ENCODE measurements at regions of chr7 and their contacts with region 1.

Region 1: GRCh38 chr7:92833024-92833765 is 3.2 kb downstream of the CDK6 start:
- DNase-seq: peak; percentile 83 to 89 (median 86)
- H3K4me3 ChIP-seq: peak overlapping the region; percentile 73 to 89
- H3K4me3 Mint-ChIP-seq: peak overlapping the region; percentile 87 to 98 (median 94)
- H3K27ac ChIP-seq: peak overlapping the region; percentile 68
- H3K27ac Mint-ChIP-seq: peak overlapping the region; percentile 93 to 96 (median 94)
- H3K4me1 ChIP-seq: peaks cover 36% of the 10 kb centered on the region
- H3K4me1 Mint-ChIP-seq: peaks cover 30 to 66% (median 43%) of the 10 kb centered on the region in 4 donors
- H3K27me3 ChIP-seq: no peaks in the 10 kb centered on the region
- H3K27me3 Mint-ChIP-seq: no peaks in the 10 kb centered on the region

Region 2: GRCh38 chr7:92134271-92135051 is 698.7 kb before region 1 on chr7 and contains the start of gene CYP51A1:
- CTCF ChIA-PET with region 1: no interaction called
- POLR2A ChIA-PET with region 1: no interaction called
- intact Hi-C with region 1: loop called (anchors 10 kb)
- DNase-seq: peak; percentile 94 to 97 (median 95)
- H3K4me3 ChIP-seq: peak within 1 kb of the TSS; percentile 45 to 92
- H3K4me3 Mint-ChIP-seq: peak within 1 kb of the TSS; percentile 96 to 100 (median 99)
- H3K27ac ChIP-seq: peak within 1 kb of the TSS; percentile 77
- H3K27ac Mint-ChIP-seq: peak within 1 kb of the TSS; percentile 97 to 100 (median 100)
- H3K4me1 ChIP-seq: peaks cover 19% of the 10 kb centered on the region
- H3K4me1 Mint-ChIP-seq: peaks cover 18 to 36% (median 26%) of the 10 kb centered on the region in 4 donors
- H3K27me3 ChIP-seq: no peaks in the 10 kb centered on the region
- H3K27me3 Mint-ChIP-seq: no peaks in the 10 kb centered on the region
- total RNA-seq, gene CYP51A1: 14.3 to 15.2 TPM

Region 3: GRCh38 chr7:92528188-92528957 is 304.8 kb before region 1 on chr7 and contains the starts of genes PEX1 and RBM48:
- CTCF ChIA-PET with region 1: interaction called, 4 read pairs
- POLR2A ChIA-PET with region 1: interaction called, 11 read pairs
- intact Hi-C with region 1: loop called (anchors 1 kb)
- DNase-seq: peak; percentile 93 to 98 (median 98)
- H3K4me3 ChIP-seq: peak within 1 kb of the TSS; percentile 92 to 97
- H3K4me3 Mint-ChIP-seq: peak within 1 kb of the TSS; percentile 93 to 99 (median 96)
- H3K27ac ChIP-seq: peak within 1 kb of the TSS; percentile 91
- H3K27ac Mint-ChIP-seq: peak within 1 kb of the TSS; percentile 87 to 100 (median 98)
- H3K4me1 ChIP-seq: peaks cover 33% of the 10 kb centered on the region
- H3K4me1 Mint-ChIP-seq: peaks cover 31 to 52% (median 38%) of the 10 kb centered on the region in 4 donors
- H3K27me3 ChIP-seq: no peaks in the 10 kb centered on the region
- H3K27me3 Mint-ChIP-seq: no peaks in the 10 kb centered on the region
- total RNA-seq, gene PEX1: 35.4 to 38.0 TPM
- total RNA-seq, gene RBM48: 37.5 to 37.9 TPM

Region 4: DNA sequence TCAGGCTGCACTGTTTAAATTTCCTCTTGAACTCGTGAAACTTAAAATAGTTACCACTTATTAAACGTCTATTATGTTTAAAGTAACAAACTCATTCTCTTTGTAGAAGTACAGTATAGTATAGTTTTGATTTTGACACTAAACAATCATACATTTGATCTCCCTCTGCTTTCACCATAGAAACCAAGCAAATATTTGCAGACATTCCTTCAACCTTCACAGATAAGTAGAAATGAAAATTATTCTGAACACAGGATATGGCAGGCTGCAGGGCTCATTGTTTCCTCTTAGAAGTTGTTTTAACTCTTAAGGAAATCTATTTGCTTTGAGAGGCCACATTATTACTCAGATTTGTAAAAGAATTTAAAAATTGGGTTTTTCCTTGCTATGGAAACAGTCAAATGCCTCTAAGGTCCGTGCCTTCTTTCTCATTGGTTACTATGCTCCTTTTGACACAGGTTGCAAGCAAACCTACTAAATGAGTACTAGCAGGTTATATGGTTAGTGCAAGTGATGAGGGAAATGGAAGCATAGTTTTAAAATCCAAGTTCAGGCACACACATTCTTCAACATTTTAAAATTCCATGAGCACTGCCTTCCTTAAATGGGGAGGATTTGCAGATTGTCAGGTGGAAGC is 150.2 kb before region 1 on chr7:
- CTCF ChIA-PET with region 1: interaction called, 11 read pairs
- POLR2A ChIA-PET with region 1: interaction called, 4 read pairs
- intact Hi-C with region 1: no loop called
- DNase-seq: peak; percentile 25 to 45 (median 39)
- H3K4me3 ChIP-seq: peak overlapping the region in 1 of 2 donors; percentile 4
- H3K4me3 Mint-ChIP-seq: peak overlapping the region in 7 of 8 donors; percentile 8 to 70 (median 62)
- H3K27ac ChIP-seq: peak overlapping the region; percentile 32
- H3K27ac Mint-ChIP-seq: peak overlapping the region; percentile 38 to 91 (median 81)
- H3K4me1 ChIP-seq: peaks cover 73% of the 10 kb centered on the region
- H3K4me1 Mint-ChIP-seq: peaks cover 65 to 87% (median 76%) of the 10 kb centered on the region in 4 donors
- H3K27me3 ChIP-seq: no peaks in the 10 kb centered on the region
- H3K27me3 Mint-ChIP-seq: no peaks in the 10 kb centered on the region

Region 5: DNA sequence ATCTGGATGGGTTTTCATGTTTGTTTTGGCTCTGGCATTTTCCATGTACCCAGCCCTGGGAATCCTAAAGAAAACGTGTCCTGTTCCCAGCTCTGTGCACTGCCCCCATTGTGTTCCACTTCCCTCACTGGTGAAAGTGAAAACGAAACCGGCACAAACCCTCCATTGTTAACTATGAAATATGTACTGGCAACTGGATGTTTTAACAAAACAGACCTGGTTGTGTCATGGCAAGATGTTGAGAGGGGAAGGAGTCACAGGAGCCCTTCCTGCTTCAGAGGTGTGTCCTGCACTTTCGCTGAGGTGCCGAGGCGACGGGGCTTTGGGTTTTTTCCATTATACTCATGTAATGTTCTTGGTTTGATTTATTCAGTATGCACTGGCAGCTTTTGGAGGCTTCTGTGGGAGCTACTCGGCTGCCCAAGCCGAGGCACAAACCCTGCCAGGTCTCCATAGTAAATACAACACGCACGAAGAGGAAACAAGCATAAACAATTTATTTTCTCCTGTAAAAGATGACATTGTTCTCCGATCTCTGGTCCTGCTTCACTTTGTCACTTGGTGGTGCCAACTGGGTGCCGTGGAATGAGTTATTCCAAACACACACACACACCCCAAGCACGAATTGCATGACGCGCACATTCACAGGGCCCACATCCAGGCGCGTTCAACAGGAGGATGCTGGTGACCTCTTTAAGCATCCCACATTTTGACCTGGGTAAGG is 115.0 kb before region 1 on chr7:
- CTCF ChIA-PET with region 1: interaction called, 13 read pairs
- POLR2A ChIA-PET with region 1: interaction called, 11 read pairs
- intact Hi-C with region 1: loop called (anchors 1 kb)
- DNase-seq: peak; percentile 47 to 71 (median 62)
- H3K4me3 ChIP-seq: peak overlapping the region; percentile 21 to 55
- H3K4me3 Mint-ChIP-seq: peak overlapping the region; percentile 88 to 94 (median 91)
- H3K27ac ChIP-seq: peak overlapping the region; percentile 39
- H3K27ac Mint-ChIP-seq: peak overlapping the region; percentile 68 to 96 (median 92)
- H3K4me1 ChIP-seq: peaks cover 28% of the 10 kb centered on the region
- H3K4me1 Mint-ChIP-seq: peaks cover 20 to 50% (median 36%) of the 10 kb centered on the region in 4 donors
- H3K27me3 ChIP-seq: no peaks in the 10 kb centered on the region
- H3K27me3 Mint-ChIP-seq: no peaks in the 10 kb centered on the region

Region 6: DNA sequence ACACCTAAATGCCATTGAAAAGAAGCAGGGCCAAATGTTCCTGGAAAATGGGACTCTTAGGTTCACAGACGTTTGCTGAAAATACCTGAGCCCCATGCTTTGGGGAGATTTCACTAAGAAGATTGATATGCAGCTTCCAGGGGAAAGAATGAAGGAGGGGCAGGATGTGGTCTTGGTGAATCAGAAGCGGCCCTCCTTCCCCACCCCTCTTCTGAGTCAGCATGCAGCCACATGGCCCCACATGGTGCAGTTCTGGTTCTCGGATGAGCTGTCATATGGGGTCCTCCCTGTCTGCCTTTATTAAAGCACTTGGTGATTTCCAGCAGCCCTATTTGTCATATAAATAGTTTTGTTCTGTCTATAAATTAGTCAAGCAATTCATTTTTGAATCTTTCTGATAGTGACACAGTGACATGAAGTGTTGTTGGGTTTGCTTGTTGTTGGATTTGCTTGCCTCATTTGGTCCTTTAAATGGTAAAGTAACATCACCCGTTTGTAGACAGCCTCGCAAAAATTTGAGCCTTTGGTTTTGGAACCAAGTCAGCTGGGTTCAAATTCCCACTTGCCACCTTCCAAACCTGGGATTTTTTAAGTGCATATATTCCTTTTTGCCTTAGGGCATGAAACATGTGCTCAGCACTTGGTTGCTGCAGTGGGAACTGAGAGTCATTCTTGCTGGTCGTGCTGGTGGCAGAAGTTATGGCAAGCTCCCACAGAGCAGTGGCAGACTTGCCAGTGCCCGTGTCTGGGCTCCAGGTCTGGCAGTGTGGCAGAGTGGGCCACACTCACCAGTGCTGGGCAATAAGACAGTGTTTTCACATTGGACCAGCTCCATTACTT is 71.3 kb after region 1 on chr7:
- CTCF ChIA-PET with region 1: interaction called, 4 read pairs
- POLR2A ChIA-PET with region 1: interaction called, 4 read pairs
- intact Hi-C with region 1: loop called (anchors 2 kb)
- DNase-seq: peak; percentile 54 to 91 (median 63)
- H3K4me3 ChIP-seq: no peak overlapping the region
- H3K4me3 Mint-ChIP-seq: peak overlapping the region in 6 of 8 donors; percentile 6 to 53 (median 18)
- H3K27ac ChIP-seq: no peak overlapping the region
- H3K27ac Mint-ChIP-seq: peak overlapping the region in 6 of 7 donors; percentile 7 to 82 (median 46)
- H3K4me1 ChIP-seq: peaks cover 17% of the 10 kb centered on the region
- H3K4me1 Mint-ChIP-seq: peaks cover 17 to 25% (median 21%) of the 10 kb centered on the region in 4 donors
- H3K27me3 ChIP-seq: no peaks in the 10 kb centered on the region
- H3K27me3 Mint-ChIP-seq: no peaks in the 10 kb centered on the region

Region 7: DNA sequence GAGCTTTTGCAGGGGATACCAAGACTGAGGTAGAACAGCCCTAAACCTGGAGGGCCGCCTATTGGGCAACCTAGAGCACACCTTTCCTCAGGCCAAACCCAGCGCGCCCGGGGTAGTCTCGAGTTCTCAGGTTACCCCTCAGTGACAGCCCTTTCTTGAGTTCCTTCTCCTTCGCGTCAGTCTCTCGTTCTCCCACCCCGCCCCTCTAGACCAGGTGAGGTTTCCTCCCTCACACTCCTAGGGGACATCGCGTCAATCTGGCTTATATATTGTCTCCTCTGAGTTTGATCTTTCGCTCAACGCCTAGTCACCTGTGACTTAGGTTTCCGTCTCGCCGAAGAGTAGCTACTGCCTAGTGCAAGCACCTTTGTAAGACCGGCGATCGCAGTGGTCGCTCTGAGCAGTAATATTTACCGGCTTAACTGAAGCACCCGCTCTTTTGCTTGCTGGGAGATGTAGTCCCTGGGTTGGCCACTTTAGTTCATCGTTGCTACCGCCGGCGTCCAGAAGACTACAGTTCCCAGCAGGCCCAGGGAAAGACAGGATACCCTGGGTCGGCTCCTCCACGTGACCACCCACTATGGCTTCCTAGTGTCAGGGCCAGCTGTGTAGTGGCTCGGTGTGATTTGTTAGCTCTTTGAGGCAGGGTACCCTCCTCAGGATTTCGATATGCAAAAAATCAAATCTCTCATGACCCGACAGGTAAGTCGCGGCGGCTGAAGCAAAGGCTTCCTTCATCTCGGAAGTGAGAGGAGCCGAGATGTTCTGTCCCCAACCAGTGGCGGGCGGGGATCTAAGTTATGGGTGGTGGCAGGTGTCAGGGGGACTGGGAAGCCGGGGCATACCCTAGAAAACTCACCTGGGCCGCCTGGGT is 398.8 kb after region 1 on chr7 and contains the start of gene VPS50:
- CTCF ChIA-PET with region 1: no interaction called
- POLR2A ChIA-PET with region 1: interaction called, 8 read pairs
- intact Hi-C with region 1: loop called (anchors 1 kb)
- DNase-seq: peak; percentile 95 to 98 (median 97)
- H3K4me3 ChIP-seq: peak within 1 kb of the TSS; percentile 66 to 99
- H3K4me3 Mint-ChIP-seq: peak within 1 kb of the TSS; percentile 91 to 97 (median 95)
- H3K27ac ChIP-seq: peak within 1 kb of the TSS; percentile 86
- H3K27ac Mint-ChIP-seq: peak within 1 kb of the TSS; percentile 85 to 100 (median 98)
- H3K4me1 ChIP-seq: peaks cover 31% of the 10 kb centered on the region
- H3K4me1 Mint-ChIP-seq: peaks cover 9 to 20% (median 14%) of the 10 kb centered on the region in 4 donors
- H3K27me3 ChIP-seq: no peaks in the 10 kb centered on the region
- H3K27me3 Mint-ChIP-seq: no peaks in the 10 kb centered on the region
- total RNA-seq, gene VPS50: 35.1 to 45.8 TPM